ENCODE measurements at regions of chr2 and their contacts with region 1.

Region 1: DNA sequence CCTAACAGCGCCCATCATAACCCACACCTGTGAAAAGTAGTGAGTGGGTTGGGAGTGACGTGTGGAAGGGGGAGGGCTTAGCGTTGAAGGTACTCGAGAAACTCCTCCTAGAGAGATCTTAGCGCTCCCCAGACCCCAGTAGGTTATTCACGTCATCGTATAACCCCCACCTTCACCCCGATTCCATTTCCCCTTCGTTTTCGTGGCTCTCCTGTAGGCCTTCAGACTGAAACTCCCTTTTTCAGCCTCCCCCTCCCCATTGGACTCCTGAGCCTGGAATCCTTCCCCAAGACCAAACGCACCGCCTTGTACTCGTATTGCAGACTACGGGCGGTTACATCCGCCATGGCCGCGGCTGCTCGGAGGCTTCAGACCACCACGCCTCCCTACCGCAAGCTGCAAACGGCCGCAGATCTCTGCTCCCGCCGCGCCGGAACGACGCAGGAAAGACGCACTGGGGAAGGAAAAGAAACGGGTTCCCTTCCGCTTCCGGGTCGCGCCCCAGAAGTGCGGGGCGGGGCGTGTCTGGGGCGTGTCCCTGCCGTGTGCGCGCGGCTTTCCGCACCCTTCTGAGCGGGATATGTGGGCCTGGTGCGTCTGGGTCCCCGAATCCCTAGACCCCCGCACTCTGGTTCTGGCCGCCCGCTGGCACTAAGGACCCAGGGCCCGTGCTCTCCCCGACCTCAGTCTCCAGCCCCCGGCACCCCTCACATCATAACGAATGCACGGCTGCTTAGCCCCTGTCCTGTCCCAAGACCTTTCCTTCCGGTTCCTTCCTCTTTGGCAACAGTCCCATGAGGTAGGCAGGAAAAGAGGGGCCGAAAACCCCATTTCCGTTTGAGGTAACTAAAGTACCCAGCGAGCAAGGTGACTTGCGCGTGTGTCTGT is at the start of gene SNRNP200:
- DNase-seq: peak; percentile 94
- ATAC-seq: peak; percentile 95
- H3K4me3 Mint-ChIP-seq: peak within 1 kb of the TSS; percentile 99
- H3K27ac Mint-ChIP-seq: peak within 1 kb of the TSS; percentile 100
- H3K4me1 Mint-ChIP-seq: peaks cover 69% of the 10 kb centered on the region
- H3K27me3 Mint-ChIP-seq: no peaks in the 10 kb centered on the region
- total RNA-seq, gene SNRNP200: 177 to 181 TPM

Region 2: DNA sequence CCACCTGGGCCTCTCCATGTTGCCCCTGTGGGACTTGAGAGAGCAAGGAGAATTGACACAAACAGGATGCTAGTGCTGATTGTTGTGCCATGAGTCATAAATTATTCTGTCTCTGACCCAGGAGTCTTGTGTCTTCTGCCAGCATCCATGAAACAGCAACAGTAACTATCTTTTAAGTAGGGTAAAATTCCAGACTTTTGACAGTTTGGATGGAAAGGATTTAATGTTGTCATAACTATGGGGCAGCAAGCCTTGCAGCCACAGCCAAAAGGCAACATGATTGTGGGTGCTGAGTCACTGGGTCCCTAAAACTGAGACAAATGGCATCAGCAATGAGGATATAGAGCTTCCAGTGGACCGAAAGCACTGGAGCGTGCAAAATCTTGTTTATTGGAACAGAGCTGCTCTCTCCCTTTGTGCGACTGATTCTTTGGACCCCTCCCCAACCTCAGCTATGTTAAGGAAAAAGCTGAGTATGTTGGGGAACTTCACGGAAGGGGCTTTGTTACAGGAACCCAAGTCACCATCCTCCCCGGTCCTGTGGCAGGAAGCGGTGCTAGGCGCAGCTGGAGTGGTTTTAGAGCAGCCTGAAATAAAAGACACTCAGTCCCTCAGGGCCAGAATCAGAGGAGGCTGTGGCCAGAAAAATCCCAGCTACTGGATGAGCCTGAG is 10.2 kb after region 1 on chr2:
- CTCF ChIA-PET with region 1: interaction called, 25 read pairs
- POLR2A ChIA-PET with region 1: interaction called, 75 read pairs
- DNase-seq: peak; percentile 62
- ATAC-seq: peak; percentile 73
- H3K4me3 Mint-ChIP-seq: peak overlapping the region; percentile 67
- H3K27ac Mint-ChIP-seq: peak overlapping the region; percentile 93
- H3K4me1 Mint-ChIP-seq: peaks cover 60% of the 10 kb centered on the region
- H3K27me3 Mint-ChIP-seq: no peaks in the 10 kb centered on the region

Region 3: GRCh38 chr2:96320728-96321622 is 15.6 kb after region 1 on chr2:
- CTCF ChIA-PET with region 1: interaction called, 25 read pairs
- POLR2A ChIA-PET with region 1: interaction called, 75 read pairs
- DNase-seq: no peak
- ATAC-seq: peak; percentile 29
- H3K4me3 Mint-ChIP-seq: peak overlapping the region; percentile 78
- H3K27ac Mint-ChIP-seq: peak overlapping the region; percentile 89
- H3K4me1 Mint-ChIP-seq: peaks cover 61% of the 10 kb centered on the region
- H3K27me3 Mint-ChIP-seq: no peaks in the 10 kb centered on the region

Region 4: GRCh38 chr2:96336104-96336775 is 30.9 kb after region 1 on chr2:
- CTCF ChIA-PET with region 1: interaction called, 4 read pairs
- POLR2A ChIA-PET with region 1: interaction called, 25 read pairs
- DNase-seq: no peak
- ATAC-seq: no peak
- H3K4me3 Mint-ChIP-seq: peak overlapping the region; percentile 92
- H3K27ac Mint-ChIP-seq: peak overlapping the region; percentile 85
- H3K4me1 Mint-ChIP-seq: peaks cover 63% of the 10 kb centered on the region
- H3K27me3 Mint-ChIP-seq: no peaks in the 10 kb centered on the region

Measured in activated CD8-positive, alpha-beta T cell treated with anti-CD3 and anti-CD28 coated beads, Interleukin-2, amount 10 ng/mL, durations not matched to agents 7 days and 5 days (primary cell).